Left ventricle myocardium inferior (tissue), 1 donor: ENCODE measurements at regions of chr19 and their contacts with region 1.

Region 1: GRCh38 chr19:38402967-38403861 is at the start of gene FAM98C:
- DNase-seq: peak; percentile 96
- H3K4me3 ChIP-seq: peak within 1 kb of the TSS; percentile 96
- H3K27ac ChIP-seq: peak within 1 kb of the TSS; percentile 84
- H3K4me1 ChIP-seq: peaks cover 18% of the 10 kb centered on the region
- H3K27me3 ChIP-seq: peaks cover 35% of the 10 kb centered on the region
- CTCF ChIP-seq: peak; percentile 99
- total RNA-seq, gene FAM98C: 11.5 TPM

Region 2: DNA sequence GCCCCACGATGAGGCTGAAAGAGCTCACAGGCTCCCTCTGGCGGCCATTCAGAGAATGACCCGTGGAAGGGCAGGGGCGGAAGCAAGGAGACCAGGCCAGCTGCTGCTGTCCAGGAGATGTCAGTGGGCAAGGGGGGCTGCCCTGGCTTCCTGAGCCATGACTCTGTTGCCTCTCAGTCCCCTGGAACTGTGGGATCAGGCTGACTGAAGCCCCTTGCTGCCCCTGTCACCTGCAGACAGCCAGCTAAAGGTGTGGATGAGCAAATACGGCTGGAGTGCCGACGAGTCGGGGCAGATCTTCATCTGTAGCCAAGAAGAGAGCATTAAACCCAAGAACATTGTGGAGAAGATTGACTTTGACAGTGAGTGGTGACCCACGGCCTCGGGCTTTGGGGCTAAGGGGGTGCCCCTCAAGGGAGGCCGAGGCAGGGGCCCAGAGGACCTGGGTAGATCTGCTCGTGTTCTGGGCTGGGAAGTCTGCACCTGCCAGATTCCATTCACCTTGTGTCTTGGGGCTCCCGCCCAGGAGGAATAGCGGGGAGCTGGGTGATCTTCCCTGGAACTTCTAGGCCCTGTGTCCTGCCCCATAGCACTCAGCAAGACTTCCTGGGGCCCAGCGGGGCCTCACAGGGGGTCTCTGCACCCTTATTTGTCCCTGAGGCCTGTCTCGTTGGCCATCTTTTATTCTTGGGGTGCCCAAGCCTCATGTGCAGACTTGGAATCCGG is 231.7 kb after region 1 on chr19:
- intact Hi-C with region 1: loop called (anchors 10 kb)
- DNase-seq: peak; percentile 71
- H3K4me3 ChIP-seq: no peak overlapping the region
- H3K27ac ChIP-seq: peak overlapping the region; percentile 46
- H3K4me1 ChIP-seq: peaks cover 39% of the 10 kb centered on the region
- H3K27me3 ChIP-seq: no peaks in the 10 kb centered on the region
- CTCF ChIP-seq: peak; percentile 99